ENCODE measurements at regions of chr20 and their contacts with region 1.

Region 1: GRCh38 chr20:815914-816606 is 17.5 kb upstream of the FAM110A start:
- DNase-seq: peak in 1 of 2 donors; percentile 59
- ATAC-seq: peak; percentile 58

Region 2: DNA sequence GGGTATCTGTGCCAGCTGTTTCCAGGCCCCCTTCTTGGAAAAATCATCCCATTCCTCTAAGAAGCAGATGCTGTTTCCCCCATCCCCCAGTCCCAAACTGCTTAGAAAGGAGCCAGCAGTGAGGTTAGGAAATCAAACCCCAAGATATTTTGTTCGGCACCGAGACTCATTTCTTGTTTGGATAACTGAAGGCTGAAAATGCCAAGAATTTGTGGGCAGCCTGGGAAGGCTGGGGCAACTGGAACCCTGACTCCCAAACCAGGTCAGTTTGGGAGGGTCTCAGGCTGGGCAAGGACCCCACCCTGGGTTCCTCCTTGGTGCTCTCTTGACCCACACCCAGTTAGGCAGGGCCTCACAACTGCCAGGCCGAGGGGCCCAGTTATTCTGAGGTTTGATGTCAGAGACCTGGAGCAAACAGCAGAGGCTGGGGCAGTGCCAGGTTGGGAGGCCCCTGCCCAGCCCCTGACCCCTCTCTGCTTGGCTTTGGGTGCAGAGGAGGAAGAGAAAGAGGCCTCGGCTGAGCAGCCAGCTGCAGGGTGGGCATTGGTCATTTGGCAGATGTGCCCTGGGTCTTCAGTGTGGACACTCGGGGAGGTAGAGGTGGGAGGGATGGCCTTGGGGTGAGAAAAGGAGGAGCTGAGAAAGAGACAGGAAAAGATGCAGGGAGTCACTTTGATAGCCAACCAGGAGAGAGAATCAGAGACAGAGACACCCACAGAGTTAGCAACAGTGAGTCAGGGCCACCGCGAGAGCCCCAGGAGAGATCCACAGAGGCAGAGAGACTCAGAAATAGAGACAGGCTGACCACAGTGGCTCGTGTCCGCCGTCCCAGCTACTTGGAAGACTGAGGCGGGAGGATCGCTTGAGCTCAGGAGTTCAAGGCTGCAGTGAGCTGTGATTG is 95.1 kb after region 1 on chr20:
- intact Hi-C with region 1: no loop called
- DNase-seq: no peak
- ATAC-seq: no peak

Region 3: GRCh38 chr20:956330-956951 is 140.4 kb after region 1 on chr20:
- intact Hi-C with region 1: loop called (anchors 5 kb)
- DNase-seq: peak in 1 of 2 donors; percentile 66
- ATAC-seq: peak; percentile 83

Region 4: GRCh38 chr20:973785-974194 is 157.7 kb after region 1 on chr20:
- intact Hi-C with region 1: loop called in 1 of 2 experiments (anchors 5 kb)
- DNase-seq: peak in 1 of 2 donors; percentile 27
- ATAC-seq: peak; percentile 53

Region 5: GRCh38 chr20:1108437-1108920 is 292.4 kb after region 1 on chr20:
- intact Hi-C with region 1: loop called in 1 of 2 experiments (anchors 5 kb)
- DNase-seq: peak; percentile 35 to 70
- ATAC-seq: peak; percentile 90

Region 6: GRCh38 chr20:1212607-1213396 is 396.7 kb after region 1 on chr20:
- intact Hi-C with region 1: loop called in 1 of 2 experiments (anchors 5 kb)
- DNase-seq: peak; percentile 60 to 76
- ATAC-seq: peak; percentile 98

Measured in left colon (tissue), 2 donors.